ENCODE measurements at regions of chr13 and their contacts with region 1.

Region 1: DNA sequence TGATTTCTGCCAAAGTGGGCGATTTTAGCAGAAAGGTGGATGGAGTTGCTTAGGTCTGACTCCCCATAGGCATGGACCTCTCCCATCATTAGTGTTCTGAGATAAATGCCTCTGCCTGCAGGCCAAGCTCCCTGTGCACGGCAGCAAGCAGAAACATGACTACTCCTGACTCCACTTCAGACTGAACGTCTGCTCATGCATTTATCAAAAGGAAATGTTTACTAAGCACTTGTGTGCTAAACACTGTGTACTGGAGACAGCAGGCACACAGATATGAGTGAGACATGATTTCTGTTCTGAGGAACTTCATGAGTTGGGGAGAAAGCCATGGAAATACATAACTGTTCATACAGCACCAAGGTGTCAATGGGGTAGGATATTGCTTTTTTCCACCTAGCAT is 149.6 kb downstream of the MIPEP start:
- DNase-seq: no peak

Region 2: DNA sequence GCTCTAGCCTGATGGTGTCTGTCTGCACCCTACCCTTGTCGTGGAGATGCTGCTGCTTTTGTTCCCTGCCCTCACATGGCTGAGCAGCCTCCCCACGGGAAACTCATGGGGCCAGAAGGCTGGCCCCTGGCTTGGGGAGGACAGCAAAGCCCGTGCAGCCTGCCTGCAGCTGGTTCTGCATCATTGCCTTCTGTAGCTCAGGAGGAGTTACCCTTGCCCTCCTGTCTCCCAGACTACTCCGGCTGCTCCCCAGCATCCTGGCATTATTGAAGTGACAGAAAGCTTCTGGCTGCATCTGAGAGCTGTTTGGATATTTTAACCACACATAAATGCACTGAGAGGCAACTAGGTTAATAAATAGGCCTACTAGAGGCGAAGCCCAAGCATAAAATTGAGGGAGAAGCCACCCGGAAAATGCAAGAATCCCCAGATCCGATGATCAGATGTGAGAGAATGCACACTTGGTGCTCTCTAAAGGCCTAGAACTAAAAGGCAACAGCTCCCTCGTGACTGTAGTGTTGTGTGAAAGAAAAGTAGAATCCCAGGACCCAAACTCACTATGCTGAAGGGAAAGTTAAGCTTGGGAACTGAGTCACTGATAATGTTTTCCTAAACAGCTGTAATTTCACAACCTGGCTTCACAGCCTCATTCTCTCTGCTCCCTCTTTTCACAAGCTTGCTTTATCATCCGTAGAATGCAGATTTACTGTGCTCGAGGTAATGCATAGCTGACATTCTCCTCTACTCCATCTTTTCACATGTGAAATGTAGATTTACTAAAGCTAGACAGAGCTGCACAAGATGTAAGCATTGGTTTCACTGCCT is 58.5 kb before region 1 on chr13:
- in situ Hi-C with region 1: loop called (anchors 5 kb)
- DNase-seq: no peak

Measured in G401 (cell line).